K562 (cell line): ENCODE measurements at regions of chr7 and their contacts with region 1.

Region 1: DNA sequence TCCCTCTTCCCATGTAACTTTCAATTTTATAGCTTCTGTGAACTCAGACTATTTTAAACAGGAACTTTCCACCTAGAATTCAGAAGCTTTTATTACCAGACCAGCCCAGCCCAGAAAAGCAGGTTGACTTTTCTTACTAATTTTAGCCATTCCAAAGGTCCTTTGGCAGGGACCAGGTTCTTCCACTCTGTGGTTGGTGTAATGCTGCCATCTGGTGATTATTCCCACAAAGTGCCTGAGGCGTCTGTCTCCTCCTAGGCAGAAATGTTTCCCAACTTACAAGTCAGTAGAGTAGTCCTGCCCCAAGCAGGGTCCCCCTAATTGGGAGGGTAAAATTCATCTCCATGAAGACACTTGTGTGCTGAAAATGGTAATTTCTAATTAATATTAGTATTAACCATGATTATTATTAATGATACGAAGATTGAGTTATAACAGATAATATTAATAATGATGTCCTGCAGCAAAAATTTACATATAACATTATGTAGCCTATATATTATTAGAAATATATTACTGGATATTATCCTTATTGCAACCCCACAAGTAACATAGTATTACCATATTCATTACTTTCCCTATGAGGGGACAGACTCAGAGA is 53.0 kb upstream of the PPP1R17 start:
- DNase-seq: peak; percentile 26 to 56 (median 34)
- ATAC-seq: peak; percentile 91
- H3K4me3 ChIP-seq: no peak overlapping the region
- H3K27ac ChIP-seq: no peak overlapping the region
- H3K4me1 ChIP-seq: no peaks in the 10 kb centered on the region
- H3K27me3 ChIP-seq: no peaks in the 10 kb centered on the region
- CTCF ChIP-seq: peak; percentile 54 to 72 (median 68)
- EP300 ChIP-seq: no peak
- POLR2A ChIP-seq: no peak
- RAD21 ChIP-seq: peak; percentile 69 to 70

Region 2: DNA sequence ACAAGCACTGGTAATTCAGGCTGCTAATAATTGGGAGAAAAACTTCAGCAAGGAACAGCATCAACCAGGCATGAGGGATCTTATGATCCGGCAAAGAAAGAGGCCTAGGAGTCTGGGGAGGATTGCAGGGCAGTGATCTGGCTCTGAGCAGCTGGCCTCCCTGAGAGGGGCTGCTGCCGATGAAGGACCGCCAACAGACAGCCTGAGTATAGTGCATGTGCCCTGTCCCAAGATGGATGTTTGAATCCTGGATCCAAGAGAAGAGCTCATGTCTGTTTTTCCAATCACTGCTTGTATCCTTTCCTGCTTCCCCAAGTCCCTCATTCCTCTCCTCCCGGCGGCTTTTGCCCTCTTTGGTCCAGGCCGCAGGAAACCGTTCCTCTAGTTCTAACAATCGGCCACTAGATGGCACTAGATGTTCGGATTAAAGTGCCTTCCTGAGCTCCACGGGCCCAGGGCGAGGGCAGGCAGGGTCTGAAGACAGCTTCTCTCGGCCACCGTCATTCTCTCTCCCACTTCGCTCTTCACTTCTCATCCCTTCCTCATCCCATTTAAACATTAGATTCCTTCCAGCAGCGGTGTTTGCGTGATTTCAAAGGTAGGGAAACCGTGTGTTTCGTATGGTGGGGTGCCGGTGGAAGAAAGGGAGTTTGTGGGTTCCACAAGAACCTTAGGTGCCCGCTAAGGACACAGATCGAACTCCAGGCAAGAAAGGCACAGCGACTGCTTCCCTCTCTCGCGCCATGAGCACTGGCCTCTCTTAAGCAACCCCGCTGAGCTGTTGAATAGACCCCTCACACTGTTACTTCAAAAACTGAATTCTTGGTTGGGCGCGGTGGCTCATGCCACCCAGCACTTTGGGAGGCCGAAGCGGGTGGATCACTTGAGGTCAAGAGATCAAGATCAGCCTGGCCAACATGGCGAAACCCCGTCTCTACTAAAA is 499.5 kb before region 1 on chr7:
- CTCF ChIA-PET with region 1: interaction called, 3 read pairs
- POLR2A ChIA-PET with region 1: no interaction called
- in situ Hi-C with region 1: no loop called
- intact Hi-C with region 1: loop called (anchors 1 kb)
- DNase-seq: peak; percentile 69 to 82 (median 74)
- ATAC-seq: peak; percentile 99
- H3K4me3 ChIP-seq: no peak overlapping the region
- H3K27ac ChIP-seq: no peak overlapping the region
- H3K4me1 ChIP-seq: no peaks in the 10 kb centered on the region
- H3K27me3 ChIP-seq: peaks cover 0 to 4% of the 10 kb centered on the region in 2 experiments; a peak in 3 of 5 replicates
- CTCF ChIP-seq: peak; percentile 69 to 80 (median 78)
- EP300 ChIP-seq: no peak
- POLR2A ChIP-seq: no peak
- RAD21 ChIP-seq: peak; percentile 51 to 76

Region 3: DNA sequence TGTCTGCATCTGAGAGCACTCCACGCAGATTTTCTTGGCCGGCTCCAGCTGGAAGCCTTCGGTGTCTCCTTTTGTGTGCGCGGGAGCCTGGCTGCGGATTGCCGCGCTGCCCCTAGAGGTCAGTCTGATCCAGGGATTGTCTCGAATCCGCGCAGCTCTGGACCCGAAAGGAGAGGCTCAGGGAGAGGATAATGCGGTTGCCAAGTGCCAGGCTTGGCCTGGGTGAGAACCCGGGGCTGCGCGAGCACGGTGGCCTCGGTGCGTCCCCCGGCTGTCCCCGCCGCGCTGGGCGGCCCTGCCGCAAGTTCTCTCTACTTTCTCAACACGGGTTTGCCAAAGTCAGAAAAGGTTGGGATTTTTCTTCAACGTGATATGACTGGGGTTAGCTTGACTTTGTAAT is 441.0 kb before region 1 on chr7:
- CTCF ChIA-PET with region 1: no interaction called
- POLR2A ChIA-PET with region 1: no interaction called
- in situ Hi-C with region 1: no loop called
- intact Hi-C with region 1: loop called (anchors 5 kb)
- DNase-seq: peak; percentile 53 to 63 (median 59)
- ATAC-seq: peak; percentile 100
- H3K4me3 ChIP-seq: no peak overlapping the region
- H3K27ac ChIP-seq: no peak overlapping the region
- H3K4me1 ChIP-seq: peaks cover 0 to 4% of the 10 kb centered on the region in 2 experiments; a peak in 1 of 5 replicates
- H3K27me3 ChIP-seq: no peaks in the 10 kb centered on the region
- CTCF ChIP-seq: peak; percentile 77 to 81 (median 81)
- EP300 ChIP-seq: no peak
- POLR2A ChIP-seq: no peak
- RAD21 ChIP-seq: peak; percentile 18 to 67; a peak in 3 of 4 replicates

Region 4: GRCh38 chr7:31443457-31443856 is 190.5 kb before region 1 on chr7:
- CTCF ChIA-PET with region 1: interaction called, 7 read pairs
- POLR2A ChIA-PET with region 1: no interaction called
- in situ Hi-C with region 1: no loop called
- intact Hi-C with region 1: loop called (anchors 1 kb)
- DNase-seq: peak; percentile 53 to 63 (median 57)
- ATAC-seq: peak; percentile 89
- H3K4me3 ChIP-seq: no peak overlapping the region
- H3K27ac ChIP-seq: no peak overlapping the region
- H3K4me1 ChIP-seq: no peaks in the 10 kb centered on the region
- H3K27me3 ChIP-seq: no peaks in the 10 kb centered on the region
- CTCF ChIP-seq: peak; percentile 58 to 78 (median 76); a peak in 5 of 6 replicates
- EP300 ChIP-seq: no peak
- POLR2A ChIP-seq: no peak
- RAD21 ChIP-seq: peak; percentile 54 to 67

Region 5: GRCh38 chr7:31476073-31476745 is 157.8 kb before region 1 on chr7:
- CTCF ChIA-PET with region 1: no interaction called
- POLR2A ChIA-PET with region 1: no interaction called
- in situ Hi-C with region 1: no loop called
- intact Hi-C with region 1: no loop called
- DNase-seq: no peak
- ATAC-seq: no peak
- H3K4me3 ChIP-seq: no peak overlapping the region
- H3K27ac ChIP-seq: no peak overlapping the region
- H3K4me1 ChIP-seq: no peaks in the 10 kb centered on the region
- H3K27me3 ChIP-seq: no peaks in the 10 kb centered on the region
- CTCF ChIP-seq: no peak
- EP300 ChIP-seq: no peak
- POLR2A ChIP-seq: no peak
- RAD21 ChIP-seq: no peak

Region 6: DNA sequence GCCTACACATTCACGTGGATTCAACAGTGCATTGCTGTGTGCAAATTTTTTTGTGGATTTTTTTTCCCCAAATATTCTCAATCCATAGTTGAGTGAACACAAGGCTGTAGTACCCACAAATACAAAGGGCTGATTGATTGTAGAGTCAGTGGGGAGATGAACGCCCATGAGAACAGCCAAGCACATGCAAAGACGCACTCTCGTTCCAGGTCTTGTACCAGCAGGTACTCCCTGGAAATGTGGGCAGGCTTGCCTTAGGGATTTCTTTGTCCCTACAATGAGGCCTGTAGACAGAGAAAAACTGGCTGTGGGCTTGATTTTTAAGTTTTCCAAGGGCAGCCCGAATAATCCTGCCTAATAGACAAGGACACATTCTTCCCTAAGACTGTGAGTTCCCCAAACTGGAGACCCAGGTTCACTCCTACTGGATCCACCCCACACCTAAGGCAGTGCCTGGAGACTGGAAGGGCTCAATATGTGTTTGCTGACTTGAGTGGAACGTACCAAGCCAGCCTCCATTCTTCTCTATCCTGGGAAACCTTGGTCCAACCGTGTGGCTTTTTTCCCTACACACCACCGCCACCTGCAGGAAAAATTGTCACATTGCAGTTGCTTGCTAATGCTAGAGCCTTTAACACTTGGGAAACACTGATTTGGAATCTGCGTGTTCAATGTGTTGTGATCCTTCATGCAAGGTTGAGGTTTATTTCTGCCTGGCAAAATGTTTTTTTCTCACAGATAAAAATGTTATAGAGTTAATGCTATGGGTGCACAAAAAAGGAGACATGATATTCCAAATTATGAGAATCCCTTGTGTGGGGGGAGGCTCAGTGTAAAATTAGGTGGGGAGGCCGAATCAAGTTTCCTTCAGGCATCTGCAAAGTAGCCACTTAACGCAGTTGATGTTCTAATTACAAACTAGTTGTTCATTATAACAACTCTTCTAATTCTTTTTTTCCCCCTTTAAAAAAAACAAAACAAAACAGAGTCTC is 102.3 kb after region 1 on chr7:
- CTCF ChIA-PET with region 1: no interaction called
- POLR2A ChIA-PET with region 1: no interaction called
- in situ Hi-C with region 1: no loop called
- intact Hi-C with region 1: no loop called
- DNase-seq: peak; percentile 57 to 69 (median 64)
- ATAC-seq: peak; percentile 90
- H3K4me3 ChIP-seq: no peak overlapping the region
- H3K27ac ChIP-seq: no peak overlapping the region
- H3K4me1 ChIP-seq: no peaks in the 10 kb centered on the region
- H3K27me3 ChIP-seq: no peaks in the 10 kb centered on the region; a peak in 2 of 5 replicates
- CTCF ChIP-seq: peak; percentile 72 to 87 (median 85)
- EP300 ChIP-seq: no peak
- POLR2A ChIP-seq: no peak
- RAD21 ChIP-seq: peak; percentile 72 to 76

Region 7: GRCh38 chr7:31957090-31957720 is 323.2 kb after region 1 on chr7:
- CTCF ChIA-PET with region 1: no interaction called
- POLR2A ChIA-PET with region 1: no interaction called
- in situ Hi-C with region 1: no loop called
- intact Hi-C with region 1: no loop called
- DNase-seq: no peak
- ATAC-seq: no peak
- H3K4me3 ChIP-seq: no peak overlapping the region
- H3K27ac ChIP-seq: no peak overlapping the region
- H3K4me1 ChIP-seq: no peaks in the 10 kb centered on the region
- H3K27me3 ChIP-seq: no peaks in the 10 kb centered on the region
- CTCF ChIP-seq: no peak
- EP300 ChIP-seq: no peak
- POLR2A ChIP-seq: no peak
- RAD21 ChIP-seq: no peak

Region 8: GRCh38 chr7:32115831-32116230 is 481.8 kb after region 1 on chr7:
- CTCF ChIA-PET with region 1: no interaction called
- POLR2A ChIA-PET with region 1: no interaction called
- in situ Hi-C with region 1: no loop called
- intact Hi-C with region 1: no loop called
- DNase-seq: no peak
- ATAC-seq: no peak
- H3K4me3 ChIP-seq: no peak overlapping the region
- H3K27ac ChIP-seq: no peak overlapping the region
- H3K4me1 ChIP-seq: no peaks in the 10 kb centered on the region
- H3K27me3 ChIP-seq: no peaks in the 10 kb centered on the region
- CTCF ChIP-seq: no peak
- EP300 ChIP-seq: no peak
- POLR2A ChIP-seq: no peak
- RAD21 ChIP-seq: no peak